CD8-positive, alpha-beta T cell (primary cell): ENCODE measurements at regions of chr10 and their contacts with region 1.

Region 1: DNA sequence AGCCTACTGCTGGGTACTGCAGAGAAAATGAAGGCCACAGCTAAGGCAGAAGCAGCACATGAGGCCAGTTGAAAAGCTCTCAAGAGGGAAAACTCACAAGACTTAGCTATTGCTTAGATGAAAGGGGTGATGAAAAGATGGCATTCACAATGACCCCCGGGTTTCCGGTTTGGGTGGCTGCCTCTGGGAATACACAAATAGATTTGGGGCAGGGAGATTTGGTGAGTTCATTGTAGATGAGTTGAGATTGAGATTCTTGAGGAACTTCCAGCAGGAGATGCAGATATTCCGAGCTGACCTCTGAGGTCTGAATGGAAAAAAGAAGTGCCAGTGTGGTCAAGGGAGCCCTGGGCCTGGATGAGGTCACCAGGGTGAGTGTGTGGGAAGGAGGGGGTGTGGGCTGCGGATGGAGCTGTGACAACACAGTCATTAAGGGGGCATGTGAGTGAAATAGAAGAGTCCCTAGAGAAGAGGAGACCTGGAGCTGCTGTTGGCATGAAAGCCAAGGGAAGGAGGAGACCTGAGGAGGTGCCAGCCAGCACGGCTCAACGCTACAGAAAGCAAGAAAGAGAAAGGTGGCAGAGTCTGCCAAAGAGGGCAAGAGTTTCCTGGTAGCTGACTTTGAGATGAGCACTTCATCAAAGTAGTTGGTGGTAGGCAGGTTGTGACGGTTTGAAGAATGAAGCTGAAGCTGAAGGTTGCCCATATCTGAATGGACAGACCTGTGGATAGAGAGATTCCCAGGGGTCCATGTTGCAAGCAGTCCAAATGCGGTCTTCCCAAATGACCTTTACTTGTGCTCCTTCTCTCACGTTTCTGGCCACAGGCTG is 43.7 kb downstream of the HIF1AN start:
- DNase-seq: peak in 1 of 9 experiments; percentile 29
- ATAC-seq: no peak
- H3K4me3 ChIP-seq: no peak overlapping the region
- H3K4me3 Mint-ChIP-seq: no peak overlapping the region
- H3K27ac ChIP-seq: no peak overlapping the region
- H3K27ac Mint-ChIP-seq: no peak overlapping the region
- H3K4me1 ChIP-seq: no peaks in the 10 kb centered on the region
- H3K4me1 Mint-ChIP-seq: no peaks in the 10 kb centered on the region
- H3K27me3 ChIP-seq: peaks cover 0 to 1% of the 10 kb centered on the region in 2 experiments
- H3K27me3 Mint-ChIP-seq: peaks cover 30% of the 10 kb centered on the region
- CTCF ChIP-seq: no peak

Region 2: DNA sequence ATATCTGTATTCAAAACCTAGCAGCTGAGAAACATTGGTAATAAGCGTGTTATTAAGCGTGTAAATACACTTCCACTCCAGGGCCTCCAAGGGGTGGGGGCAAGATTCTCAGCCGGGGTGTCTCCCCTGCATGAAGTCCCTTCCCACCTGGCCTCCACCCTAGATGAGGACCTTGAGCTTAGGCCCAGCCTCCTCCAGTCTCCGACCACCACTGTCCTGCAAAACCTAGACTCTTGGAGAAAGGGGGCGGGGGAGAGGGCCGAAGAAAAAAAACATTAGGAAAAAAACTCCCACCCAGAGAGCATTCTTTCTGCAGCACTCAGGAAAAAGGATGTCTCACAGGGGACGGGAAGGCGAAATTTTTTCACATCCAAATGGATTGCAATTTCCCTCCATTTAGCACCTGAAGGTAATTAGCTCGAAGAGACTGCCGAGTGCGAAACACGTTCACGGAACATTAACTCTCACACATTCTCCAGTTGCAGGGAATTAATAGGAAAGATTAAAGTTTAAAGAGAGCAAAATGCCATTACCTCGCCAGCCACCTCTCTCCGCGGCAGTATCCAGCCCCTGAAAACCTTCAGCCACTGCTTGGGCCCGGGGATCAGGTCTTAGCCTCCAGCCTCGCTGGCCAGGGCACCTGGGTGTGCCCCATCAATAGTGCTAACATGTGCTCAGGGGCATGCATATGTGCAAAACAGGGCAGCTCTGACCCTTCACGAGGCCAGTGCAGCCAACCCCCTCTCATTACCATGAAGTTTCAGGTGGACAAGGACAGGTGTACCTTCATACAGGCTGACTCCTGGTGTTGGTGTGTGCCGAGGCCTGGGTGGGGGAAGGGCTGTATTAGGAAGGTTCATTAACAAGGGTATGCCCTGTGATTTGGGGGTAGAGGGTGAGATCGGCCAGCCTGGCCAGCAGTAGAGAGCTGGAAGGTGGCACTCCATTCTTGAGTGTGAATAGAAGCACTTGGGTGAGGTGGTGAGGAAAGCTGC is 33.4 kb after region 1 on chr10:
- CTCF ChIA-PET with region 1: no interaction called
- POLR2A ChIA-PET with region 1: no interaction called
- intact Hi-C with region 1: loop called in 1 of 2 experiments (anchors 1 kb)
- DNase-seq: peak in 1 of 9 experiments; percentile 32
- ATAC-seq: no peak
- H3K4me3 ChIP-seq: no peak overlapping the region
- H3K4me3 Mint-ChIP-seq: no peak overlapping the region
- H3K27ac ChIP-seq: no peak overlapping the region
- H3K27ac Mint-ChIP-seq: no peak overlapping the region
- H3K4me1 ChIP-seq: no peaks in the 10 kb centered on the region
- H3K4me1 Mint-ChIP-seq: no peaks in the 10 kb centered on the region
- H3K27me3 ChIP-seq: peaks cover 0 to 3% of the 10 kb centered on the region in 2 experiments
- H3K27me3 Mint-ChIP-seq: peaks cover 43% of the 10 kb centered on the region
- CTCF ChIP-seq: no peak

Region 3: DNA sequence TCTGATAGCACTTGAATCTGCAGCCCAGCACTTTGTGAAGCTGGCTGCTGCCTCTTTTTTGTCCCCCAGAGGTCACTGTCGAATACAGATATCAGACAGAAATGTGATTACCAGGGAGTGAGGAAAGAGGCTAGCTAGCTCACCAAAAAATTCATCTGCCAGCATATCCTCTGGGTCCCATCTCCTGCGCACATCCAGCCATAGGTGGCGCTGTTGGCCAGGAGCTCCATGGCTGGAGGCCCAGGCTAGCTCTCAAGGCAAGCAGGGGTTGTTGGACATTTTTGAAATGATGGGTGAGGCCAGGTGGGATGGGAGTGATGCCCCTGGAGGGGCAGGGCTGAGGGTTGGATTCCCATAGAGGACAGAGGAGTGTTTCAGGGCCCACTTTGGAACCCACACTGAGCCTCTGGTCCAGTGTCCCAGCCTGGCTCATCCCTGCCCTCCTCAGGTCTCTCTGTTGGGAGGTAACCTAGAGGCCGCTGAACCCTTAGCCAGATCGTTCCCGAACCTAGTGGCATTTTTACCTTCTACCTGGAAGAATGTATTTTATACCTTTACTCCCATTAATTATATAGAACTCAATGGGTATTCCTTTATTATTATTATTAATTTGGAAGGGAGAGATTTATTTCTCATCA is 1023.4 kb after region 1 on chr10:
- CTCF ChIA-PET with region 1: no interaction called
- POLR2A ChIA-PET with region 1: no interaction called
- intact Hi-C with region 1: no loop called
- DNase-seq: peak in 8 of 9 experiments; percentile 26 to 68 (median 48)
- ATAC-seq: peak; percentile 81
- H3K4me3 ChIP-seq: no peak overlapping the region
- H3K4me3 Mint-ChIP-seq: no peak overlapping the region
- H3K27ac ChIP-seq: no peak overlapping the region
- H3K27ac Mint-ChIP-seq: no peak overlapping the region
- H3K4me1 ChIP-seq: no peaks in the 10 kb centered on the region
- H3K4me1 Mint-ChIP-seq: no peaks in the 10 kb centered on the region
- H3K27me3 ChIP-seq: no peaks in the 10 kb centered on the region
- H3K27me3 Mint-ChIP-seq: no peaks in the 10 kb centered on the region
- CTCF ChIP-seq: peak; percentile 75